Caco-2 (cell line): ENCODE measurements at regions of chr3 and their contacts with region 1.

Region 1: DNA sequence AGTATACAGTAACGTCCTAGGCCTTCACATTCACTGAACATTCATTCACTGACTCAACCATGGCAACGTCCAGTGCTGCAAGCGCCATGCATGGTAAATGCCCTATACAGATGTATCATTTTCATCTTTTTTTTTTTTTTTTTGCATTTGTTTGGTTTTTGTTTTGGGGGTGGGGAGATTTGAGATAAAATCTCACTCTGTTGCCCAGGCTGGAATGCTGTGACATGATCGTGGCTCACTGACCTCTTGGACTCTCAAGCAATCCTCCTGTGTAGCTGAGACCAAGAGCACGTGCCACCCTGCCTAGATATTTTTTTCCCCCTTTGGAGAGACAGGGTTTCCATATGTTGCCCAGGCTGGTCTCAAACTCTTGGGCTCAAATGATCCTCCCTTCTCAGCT is 37.4 kb downstream of the SUSD5 start:
- DNase-seq: peak in 1 of 2 experiments; percentile 8
- H3K4me3 ChIP-seq: no peak overlapping the region
- H3K4me3 Mint-ChIP-seq: no peak overlapping the region
- H3K27ac Mint-ChIP-seq: no peak overlapping the region
- H3K4me1 ChIP-seq: peaks cover 5% of the 10 kb centered on the region; the same call in 1 of the 2 replicates
- H3K4me1 Mint-ChIP-seq: no peaks in the 10 kb centered on the region
- H3K27me3 ChIP-seq: no peaks in the 10 kb centered on the region
- H3K27me3 Mint-ChIP-seq: no peaks in the 10 kb centered on the region
- CTCF ChIP-seq: no peak

Region 2: GRCh38 chr3:32684800-32685542 is 496.3 kb before region 1 on chr3 and contains the start of gene CNOT10:
- CTCF ChIA-PET with region 1: interaction called, 14 read pairs
- POLR2A ChIA-PET with region 1: no interaction called
- intact Hi-C with region 1: no loop called
- DNase-seq: peak; percentile 94 to 95
- H3K4me3 ChIP-seq: peak within 1 kb of the TSS; percentile 63
- H3K4me3 Mint-ChIP-seq: peak within 1 kb of the TSS; percentile 86
- H3K27ac Mint-ChIP-seq: peak within 1 kb of the TSS; percentile 82
- H3K4me1 ChIP-seq: peaks cover 11% of the 10 kb centered on the region; the same call in 1 of the 2 replicates
- H3K4me1 Mint-ChIP-seq: peaks cover 14% of the 10 kb centered on the region
- H3K27me3 ChIP-seq: no peaks in the 10 kb centered on the region
- H3K27me3 Mint-ChIP-seq: no peaks in the 10 kb centered on the region
- CTCF ChIP-seq: peak in 1 of 2 experiments; percentile 52
- total RNA-seq, gene CNOT10: 37.2 and 49.5 TPM in 2 replicates

Region 3: DNA sequence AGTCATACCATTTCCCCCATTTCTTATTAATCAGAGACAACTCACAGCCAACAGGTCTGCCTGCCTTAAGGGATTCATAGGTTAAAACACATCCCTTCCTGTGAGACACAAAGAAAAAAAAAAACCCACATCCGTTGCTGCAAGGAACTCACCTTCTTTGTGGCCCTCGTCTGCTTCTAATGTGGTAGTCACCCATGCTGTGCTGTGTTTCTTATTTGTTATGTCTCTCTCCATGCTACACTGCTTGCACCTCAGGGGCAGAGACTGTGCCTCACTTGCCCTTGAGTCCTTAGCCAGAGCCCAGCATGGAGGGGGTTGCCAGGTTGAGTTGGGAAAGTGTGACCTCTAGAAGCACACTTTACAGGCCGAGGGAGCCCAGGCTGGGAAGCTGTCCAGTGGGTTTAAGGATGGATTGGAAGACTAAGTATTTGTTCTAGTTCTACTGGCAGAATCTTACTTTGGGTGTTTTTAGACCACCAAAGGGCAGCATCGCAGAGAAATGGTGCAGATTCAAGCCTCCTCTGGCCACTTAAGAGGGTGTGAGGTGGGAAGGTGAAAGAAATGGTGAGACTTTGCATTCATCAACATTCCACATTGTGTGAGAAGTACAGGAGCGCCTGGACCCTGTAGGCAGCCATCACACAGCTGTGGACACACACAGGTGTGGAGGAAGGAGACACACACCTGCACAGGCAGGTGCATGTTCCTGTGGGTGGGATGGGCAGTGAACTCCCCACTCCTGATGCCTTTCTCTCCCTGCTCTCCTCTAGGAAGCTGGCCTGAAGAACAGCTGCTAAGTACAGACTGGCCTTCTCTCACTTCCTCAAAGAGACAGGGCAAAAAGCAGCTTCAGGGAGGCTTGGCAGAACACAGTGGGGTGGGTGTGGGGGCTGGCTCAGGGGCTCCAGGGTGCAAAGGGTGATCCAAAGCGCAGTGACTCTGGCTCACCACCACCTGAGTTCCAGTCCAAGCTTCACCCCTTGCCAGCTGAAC is 133.1 kb before region 1 on chr3:
- CTCF ChIA-PET with region 1: no interaction called
- POLR2A ChIA-PET with region 1: no interaction called
- intact Hi-C with region 1: no loop called
- DNase-seq: no peak
- H3K4me3 ChIP-seq: no peak overlapping the region
- H3K4me3 Mint-ChIP-seq: no peak overlapping the region
- H3K27ac Mint-ChIP-seq: no peak overlapping the region
- H3K4me1 ChIP-seq: peaks cover 15% of the 10 kb centered on the region
- H3K4me1 Mint-ChIP-seq: peaks cover 15% of the 10 kb centered on the region
- H3K27me3 ChIP-seq: no peaks in the 10 kb centered on the region
- H3K27me3 Mint-ChIP-seq: no peaks in the 10 kb centered on the region
- CTCF ChIP-seq: no peak

Region 4: DNA sequence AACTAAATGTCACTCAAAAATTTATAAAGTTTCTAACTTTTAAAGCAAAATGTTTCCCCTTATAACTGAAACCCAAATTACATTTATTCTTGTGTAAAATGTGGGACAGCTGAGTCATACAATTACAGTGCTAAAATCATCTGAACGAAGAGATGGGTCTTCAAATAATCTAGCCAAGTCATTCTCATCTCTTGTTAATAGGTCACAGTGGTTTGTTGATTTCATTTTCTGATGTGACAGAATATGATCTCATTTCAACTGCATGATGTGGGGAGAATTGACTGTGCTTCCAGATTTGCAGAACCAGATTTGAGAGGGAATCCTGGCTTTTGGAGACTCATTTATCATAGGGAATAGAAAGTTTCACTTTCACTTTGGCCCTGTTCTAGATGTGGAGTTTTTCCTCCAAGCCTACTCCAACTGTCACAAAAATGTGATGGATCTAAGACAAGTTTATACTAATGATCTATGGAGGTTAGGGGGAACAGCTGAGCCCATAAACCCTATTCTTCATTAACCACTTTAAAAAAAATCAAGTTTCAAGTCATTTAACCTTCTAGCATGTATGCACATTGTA is 1302.2 kb after region 1 on chr3:
- CTCF ChIA-PET with region 1: no interaction called
- POLR2A ChIA-PET with region 1: no interaction called
- intact Hi-C with region 1: no loop called
- DNase-seq: no peak
- H3K4me3 ChIP-seq: no peak overlapping the region
- H3K4me3 Mint-ChIP-seq: no peak overlapping the region
- H3K27ac Mint-ChIP-seq: no peak overlapping the region
- H3K4me1 ChIP-seq: peaks cover 15% of the 10 kb centered on the region
- H3K4me1 Mint-ChIP-seq: no peaks in the 10 kb centered on the region
- H3K27me3 ChIP-seq: no peaks in the 10 kb centered on the region
- H3K27me3 Mint-ChIP-seq: no peaks in the 10 kb centered on the region
- CTCF ChIP-seq: no peak